Ovary (tissue), 10 donors: ENCODE measurements at regions of chr2 and their contacts with region 1.

Region 1: DNA sequence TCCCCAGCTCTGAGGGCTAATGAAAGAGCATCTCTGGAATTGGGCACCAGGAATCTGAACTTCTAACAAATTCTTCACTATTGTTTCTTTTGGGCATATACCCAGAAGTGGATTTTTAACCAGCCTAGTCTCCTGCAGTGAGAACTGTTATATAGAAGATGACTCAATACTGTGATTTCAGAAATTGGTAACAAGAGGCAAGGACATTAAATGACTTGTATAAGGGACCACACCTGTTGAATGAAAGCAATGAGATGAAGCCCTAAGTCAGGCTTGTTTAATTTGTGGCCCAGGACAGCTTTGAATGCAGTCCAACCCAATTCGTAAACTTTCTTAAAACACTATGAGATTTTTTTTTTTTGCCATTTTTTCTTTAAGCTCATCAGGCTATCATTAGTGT is 57.9 kb downstream of the EPC2 start:
- DNase-seq: no peak
- H3K4me3 ChIP-seq: no peak overlapping the region
- H3K27ac ChIP-seq: no peak overlapping the region
- H3K4me1 ChIP-seq: no peaks in the 10 kb centered on the region
- H3K27me3 ChIP-seq: no peaks in the 10 kb centered on the region
- CTCF ChIP-seq: no peak
- EP300 ChIP-seq: no peak
- POLR2A ChIP-seq: no peak

Region 2: DNA sequence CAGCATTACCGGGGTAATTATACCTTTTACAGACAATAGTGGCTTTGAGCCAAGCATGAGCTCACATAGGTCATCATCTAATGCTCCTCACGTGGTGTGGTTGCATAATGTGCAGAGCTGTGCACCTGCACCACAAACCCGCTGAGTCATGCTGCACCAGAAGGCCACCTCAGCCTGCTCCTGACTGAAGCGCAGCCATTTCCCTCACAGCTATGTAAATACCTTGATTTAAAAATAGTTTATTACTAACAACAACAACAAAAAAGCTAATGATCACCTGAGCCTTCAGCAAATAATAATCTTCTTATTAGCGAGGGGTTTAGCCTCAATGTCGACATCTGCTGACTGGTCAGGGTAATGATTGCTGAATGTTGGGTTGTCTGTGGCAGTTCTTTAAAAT is 442.8 kb before region 1 on chr2:
- intact Hi-C with region 1: loop called in 1 of 4 experiments (anchors 10 kb)
- DNase-seq: no peak
- H3K4me3 ChIP-seq: no peak overlapping the region
- H3K27ac ChIP-seq: no peak overlapping the region
- H3K4me1 ChIP-seq: no peaks in the 10 kb centered on the region
- H3K27me3 ChIP-seq: no peaks in the 10 kb centered on the region
- CTCF ChIP-seq: no peak
- EP300 ChIP-seq: no peak
- POLR2A ChIP-seq: no peak

Region 3: DNA sequence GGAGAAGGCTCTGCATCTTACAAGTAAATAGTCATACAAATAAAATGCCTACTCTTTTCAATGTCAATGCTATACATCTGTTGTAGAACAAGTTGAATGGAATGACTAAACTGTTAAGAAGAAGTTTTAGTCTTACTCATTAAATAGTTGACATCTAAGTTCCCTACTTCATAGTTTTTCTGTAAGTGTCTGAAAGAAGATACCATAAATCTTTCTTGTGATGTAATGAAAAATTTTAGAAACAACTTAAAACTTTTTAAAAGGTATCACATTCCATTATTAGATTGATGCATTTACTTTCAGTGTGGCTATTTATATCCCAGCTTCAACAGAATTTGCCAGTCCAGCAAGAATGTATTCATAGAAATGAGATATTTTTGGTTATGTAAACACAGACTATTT is 243.1 kb before region 1 on chr2:
- intact Hi-C with region 1: no loop called
- DNase-seq: no peak
- H3K4me3 ChIP-seq: no peak overlapping the region
- H3K27ac ChIP-seq: no peak overlapping the region
- H3K4me1 ChIP-seq: no peaks in the 10 kb centered on the region
- H3K27me3 ChIP-seq: no peaks in the 10 kb centered on the region
- CTCF ChIP-seq: no peak
- EP300 ChIP-seq: no peak
- POLR2A ChIP-seq: no peak

Region 4: DNA sequence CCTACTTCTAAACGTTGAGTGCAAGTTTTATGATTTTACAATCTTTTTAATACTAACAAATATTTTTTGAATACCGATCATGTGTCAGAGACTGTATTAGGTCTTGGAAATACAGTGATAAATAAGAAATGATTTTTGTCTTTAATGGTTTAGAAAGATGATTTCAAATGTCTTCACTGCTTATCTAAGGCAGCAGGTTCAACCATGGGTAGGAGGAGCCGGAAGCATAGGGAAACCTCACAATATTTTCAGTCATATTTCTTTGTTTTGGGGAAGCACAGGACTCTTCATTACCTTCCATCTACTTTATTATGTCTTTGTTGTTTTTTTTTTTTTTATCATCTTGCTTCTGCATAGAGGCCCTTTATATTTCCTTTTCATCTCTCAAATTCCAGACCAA is 223.1 kb before region 1 on chr2:
- intact Hi-C with region 1: no loop called
- DNase-seq: no peak
- H3K4me3 ChIP-seq: no peak overlapping the region
- H3K27ac ChIP-seq: no peak overlapping the region
- H3K4me1 ChIP-seq: peaks cover 2% of the 10 kb centered on the region
- H3K27me3 ChIP-seq: no peaks in the 10 kb centered on the region
- CTCF ChIP-seq: no peak
- EP300 ChIP-seq: no peak
- POLR2A ChIP-seq: no peak

Region 5: GRCh38 chr2:150066490-150066889 is 1364.0 kb after region 1 on chr2:
- intact Hi-C with region 1: no loop called
- DNase-seq: no peak
- H3K4me3 ChIP-seq: no peak overlapping the region
- H3K27ac ChIP-seq: no peak overlapping the region
- H3K4me1 ChIP-seq: no peaks in the 10 kb centered on the region
- H3K27me3 ChIP-seq: no peaks in the 10 kb centered on the region
- CTCF ChIP-seq: no peak
- EP300 ChIP-seq: no peak
- POLR2A ChIP-seq: no peak